Natural killer cell (primary cell): ENCODE measurements at regions of chr10 and their contacts with region 1.

Region 1: DNA sequence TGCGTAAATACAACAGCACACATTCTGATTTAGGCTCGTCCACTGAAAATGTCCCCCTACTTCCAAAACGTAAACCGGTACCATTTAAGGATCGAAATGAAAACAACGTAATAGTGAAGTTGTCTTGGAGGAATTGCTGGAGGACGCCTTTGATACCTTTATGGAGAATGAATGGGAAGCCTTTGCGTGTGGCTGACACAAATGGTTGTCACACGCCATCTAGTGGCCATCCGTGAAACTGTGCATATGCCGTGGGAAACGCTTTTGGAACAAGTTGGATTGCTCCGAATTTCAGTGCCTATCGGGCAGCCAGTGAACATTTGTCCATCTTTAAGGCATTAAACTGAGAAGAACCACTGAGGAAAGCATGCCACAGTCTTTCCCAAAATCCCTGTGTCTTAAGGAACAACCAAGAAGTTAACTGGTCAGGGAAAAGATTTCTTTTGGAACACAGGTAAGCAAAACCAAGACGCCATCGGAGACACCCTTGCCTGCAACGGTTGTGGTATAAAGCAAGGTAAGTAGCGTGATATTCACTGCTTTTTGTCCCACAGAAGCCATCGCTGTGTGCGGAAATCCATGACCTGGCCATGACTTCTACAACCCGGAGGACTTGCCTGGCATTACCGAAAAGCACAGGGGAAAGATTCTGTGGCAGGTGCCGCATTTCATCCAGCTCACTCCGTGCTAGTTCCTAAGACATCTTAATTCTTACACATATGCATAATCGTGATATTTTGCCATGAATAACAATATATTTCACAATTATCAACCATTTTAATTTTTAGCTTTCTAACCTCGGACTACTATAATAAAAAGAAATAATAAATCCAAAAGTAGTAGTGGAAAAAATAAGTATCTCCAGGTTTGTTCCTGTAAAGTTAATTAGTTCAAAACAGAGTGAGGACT is 100.6 kb downstream of the FAM204A start:
- DNase-seq: peak; percentile 43 to 79
- ATAC-seq: peak in 1 of 3 donors; percentile 61
- H3K4me3 ChIP-seq: no peak overlapping the region
- H3K4me3 Mint-ChIP-seq: no peak overlapping the region
- H3K27ac ChIP-seq: no peak overlapping the region
- H3K27ac Mint-ChIP-seq: no peak overlapping the region
- H3K4me1 ChIP-seq: no peaks in the 10 kb centered on the region
- H3K4me1 Mint-ChIP-seq: peaks cover 0 to 8% of the 10 kb centered on the region in 2 donors
- H3K27me3 ChIP-seq: peaks cover 12% of the 10 kb centered on the region
- H3K27me3 Mint-ChIP-seq: peaks cover 29 to 30% of the 10 kb centered on the region in 2 donors
- CTCF ChIP-seq: peak; percentile 95

Region 2: DNA sequence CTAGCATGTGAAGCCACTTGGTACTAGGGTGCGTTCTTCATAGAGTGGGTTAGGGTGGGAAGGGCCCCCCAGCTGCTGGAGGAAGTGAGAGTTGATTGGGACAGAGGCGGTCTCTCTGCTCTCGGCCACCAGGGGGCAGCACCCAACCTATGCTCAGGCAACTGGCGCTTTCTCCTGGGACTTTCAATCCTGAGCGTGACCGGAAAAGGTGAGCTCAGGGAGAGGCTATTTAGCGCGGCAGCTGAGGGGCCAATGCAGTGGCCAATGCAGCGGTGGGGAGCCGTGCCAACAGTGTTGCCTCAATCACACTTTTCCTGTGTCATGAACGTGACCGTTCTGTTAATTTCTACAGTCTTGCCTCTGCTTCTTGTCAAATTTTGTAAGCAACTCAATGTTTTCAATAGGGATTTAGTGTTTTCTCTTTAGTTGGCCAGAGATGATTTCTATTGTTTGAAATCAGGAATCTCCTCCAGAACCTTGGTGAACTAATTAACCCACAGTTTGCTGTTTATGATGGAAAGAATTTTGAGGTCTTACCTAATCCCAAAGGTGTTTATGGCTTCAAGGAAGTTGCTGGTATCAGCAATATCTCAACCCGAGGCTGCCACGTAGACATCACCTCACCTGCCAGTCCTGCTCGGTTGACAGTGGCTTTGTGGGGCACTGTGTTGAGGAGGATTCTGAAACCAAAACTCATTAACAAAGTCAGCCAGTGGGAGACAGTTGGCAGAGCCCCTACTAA is 798.4 kb before region 1 on chr10:
- intact Hi-C with region 1: loop called (anchors 2 kb)
- DNase-seq: peak; percentile 61
- ATAC-seq: peak; percentile 61 to 85 (median 82)
- H3K4me3 ChIP-seq: no peak overlapping the region
- H3K4me3 Mint-ChIP-seq: no peak overlapping the region
- H3K27ac ChIP-seq: no peak overlapping the region
- H3K27ac Mint-ChIP-seq: no peak overlapping the region
- H3K4me1 ChIP-seq: peaks cover 9% of the 10 kb centered on the region
- H3K4me1 Mint-ChIP-seq: peaks cover 0 to 7% of the 10 kb centered on the region in 2 donors
- H3K27me3 ChIP-seq: peaks cover 6% of the 10 kb centered on the region
- H3K27me3 Mint-ChIP-seq: peaks cover 18 to 26% of the 10 kb centered on the region in 2 donors
- CTCF ChIP-seq: peak; percentile 91